CD8-positive, alpha-beta T cell (primary cell): ENCODE measurements at regions of chr4 and their contacts with region 1.

Region 1: DNA sequence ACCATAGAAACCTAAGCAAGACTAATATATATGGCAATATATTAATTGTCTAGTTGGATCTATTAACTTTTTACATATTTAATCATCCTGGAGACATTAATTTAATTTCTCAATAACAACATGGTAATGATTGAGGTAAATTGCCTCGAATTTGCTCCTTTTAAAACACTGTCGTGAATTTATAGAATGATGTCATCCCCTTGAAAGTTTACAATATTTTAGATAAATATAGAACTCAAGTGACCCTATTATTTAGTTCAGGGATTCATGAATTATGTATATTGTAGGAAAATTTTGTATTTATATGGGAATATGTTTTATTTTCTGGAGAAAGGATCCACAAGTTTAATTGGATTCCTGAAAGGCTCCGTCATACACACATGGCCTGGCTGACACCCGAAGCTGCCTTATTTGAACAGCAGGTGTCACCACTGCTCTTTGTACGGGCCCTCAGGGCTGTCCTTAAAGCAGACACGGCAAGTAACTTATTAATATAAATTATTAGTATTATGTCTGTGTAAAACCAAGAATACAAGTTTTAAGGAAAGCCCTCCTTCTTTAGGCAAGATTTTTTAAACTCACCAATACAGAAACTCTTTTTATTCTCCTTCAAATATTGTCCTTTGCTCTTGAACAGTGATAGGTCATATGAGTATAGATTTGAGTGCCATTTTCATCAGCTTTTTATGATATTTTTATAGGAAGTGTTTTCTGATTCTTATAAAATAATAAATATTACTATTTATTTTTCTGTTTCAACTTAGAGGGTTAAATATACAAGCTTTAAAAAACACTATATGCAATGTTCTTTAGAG is 1.9 kb upstream of the PLRG1 start:
- DNase-seq: peak; percentile 35 to 84 (median 70)
- ATAC-seq: peak; percentile 45
- H3K4me3 ChIP-seq: no peak overlapping the region
- H3K4me3 Mint-ChIP-seq: no peak overlapping the region
- H3K27ac ChIP-seq: no peak overlapping the region
- H3K27ac Mint-ChIP-seq: no peak overlapping the region
- H3K4me1 ChIP-seq: peaks cover 16% of the 10 kb centered on the region
- H3K4me1 Mint-ChIP-seq: peaks cover 29% of the 10 kb centered on the region
- H3K27me3 ChIP-seq: no peaks in the 10 kb centered on the region
- H3K27me3 Mint-ChIP-seq: no peaks in the 10 kb centered on the region
- CTCF ChIP-seq: peak; percentile 96

Region 2: GRCh38 chr4:154376486-154376885 is 175.6 kb before region 1 on chr4:
- CTCF ChIA-PET with region 1: no interaction called
- POLR2A ChIA-PET with region 1: no interaction called
- intact Hi-C with region 1: no loop called
- DNase-seq: no peak
- ATAC-seq: no peak
- H3K4me3 ChIP-seq: no peak overlapping the region
- H3K4me3 Mint-ChIP-seq: no peak overlapping the region
- H3K27ac ChIP-seq: no peak overlapping the region
- H3K27ac Mint-ChIP-seq: no peak overlapping the region
- H3K4me1 ChIP-seq: no peaks in the 10 kb centered on the region
- H3K4me1 Mint-ChIP-seq: no peaks in the 10 kb centered on the region
- H3K27me3 ChIP-seq: no peaks in the 10 kb centered on the region
- H3K27me3 Mint-ChIP-seq: peaks cover 2% of the 10 kb centered on the region
- CTCF ChIP-seq: no peak

Region 3: GRCh38 chr4:154779362-154779947 is 227.4 kb after region 1 on chr4:
- CTCF ChIA-PET with region 1: no interaction called
- POLR2A ChIA-PET with region 1: no interaction called
- intact Hi-C with region 1: loop called in 1 of 2 experiments (anchors 2 kb)
- DNase-seq: no peak
- ATAC-seq: no peak
- H3K4me3 ChIP-seq: no peak overlapping the region
- H3K4me3 Mint-ChIP-seq: no peak overlapping the region
- H3K27ac ChIP-seq: no peak overlapping the region
- H3K27ac Mint-ChIP-seq: no peak overlapping the region
- H3K4me1 ChIP-seq: no peaks in the 10 kb centered on the region
- H3K4me1 Mint-ChIP-seq: no peaks in the 10 kb centered on the region
- H3K27me3 ChIP-seq: no peaks in the 10 kb centered on the region
- H3K27me3 Mint-ChIP-seq: peaks cover 10% of the 10 kb centered on the region
- CTCF ChIP-seq: peak; percentile 18

Region 4: GRCh38 chr4:155371432-155372043 is 819.5 kb after region 1 on chr4:
- CTCF ChIA-PET with region 1: interaction called, 23 read pairs
- POLR2A ChIA-PET with region 1: interaction called, 11 read pairs
- intact Hi-C with region 1: loop called (anchors 1 kb)
- DNase-seq: peak in 2 of 9 experiments; percentile 43 to 61
- ATAC-seq: peak; percentile 30
- H3K4me3 ChIP-seq: no peak overlapping the region
- H3K4me3 Mint-ChIP-seq: no peak overlapping the region
- H3K27ac ChIP-seq: no peak overlapping the region
- H3K27ac Mint-ChIP-seq: no peak overlapping the region
- H3K4me1 ChIP-seq: peaks cover 8% of the 10 kb centered on the region
- H3K4me1 Mint-ChIP-seq: peaks cover 16% of the 10 kb centered on the region
- H3K27me3 ChIP-seq: no peaks in the 10 kb centered on the region
- H3K27me3 Mint-ChIP-seq: no peaks in the 10 kb centered on the region
- CTCF ChIP-seq: peak; percentile 85

Region 5: GRCh38 chr4:155777971-155778735 is 1226.1 kb after region 1 on chr4:
- CTCF ChIA-PET with region 1: no interaction called
- POLR2A ChIA-PET with region 1: no interaction called
- intact Hi-C with region 1: loop called in 1 of 2 experiments (anchors 5 kb)
- DNase-seq: no peak
- ATAC-seq: no peak
- H3K4me3 ChIP-seq: no peak overlapping the region
- H3K4me3 Mint-ChIP-seq: no peak overlapping the region
- H3K27ac ChIP-seq: no peak overlapping the region
- H3K27ac Mint-ChIP-seq: no peak overlapping the region
- H3K4me1 ChIP-seq: no peaks in the 10 kb centered on the region
- H3K4me1 Mint-ChIP-seq: no peaks in the 10 kb centered on the region
- H3K27me3 ChIP-seq: no peaks in the 10 kb centered on the region
- H3K27me3 Mint-ChIP-seq: no peaks in the 10 kb centered on the region
- CTCF ChIP-seq: no peak

Region 6: DNA sequence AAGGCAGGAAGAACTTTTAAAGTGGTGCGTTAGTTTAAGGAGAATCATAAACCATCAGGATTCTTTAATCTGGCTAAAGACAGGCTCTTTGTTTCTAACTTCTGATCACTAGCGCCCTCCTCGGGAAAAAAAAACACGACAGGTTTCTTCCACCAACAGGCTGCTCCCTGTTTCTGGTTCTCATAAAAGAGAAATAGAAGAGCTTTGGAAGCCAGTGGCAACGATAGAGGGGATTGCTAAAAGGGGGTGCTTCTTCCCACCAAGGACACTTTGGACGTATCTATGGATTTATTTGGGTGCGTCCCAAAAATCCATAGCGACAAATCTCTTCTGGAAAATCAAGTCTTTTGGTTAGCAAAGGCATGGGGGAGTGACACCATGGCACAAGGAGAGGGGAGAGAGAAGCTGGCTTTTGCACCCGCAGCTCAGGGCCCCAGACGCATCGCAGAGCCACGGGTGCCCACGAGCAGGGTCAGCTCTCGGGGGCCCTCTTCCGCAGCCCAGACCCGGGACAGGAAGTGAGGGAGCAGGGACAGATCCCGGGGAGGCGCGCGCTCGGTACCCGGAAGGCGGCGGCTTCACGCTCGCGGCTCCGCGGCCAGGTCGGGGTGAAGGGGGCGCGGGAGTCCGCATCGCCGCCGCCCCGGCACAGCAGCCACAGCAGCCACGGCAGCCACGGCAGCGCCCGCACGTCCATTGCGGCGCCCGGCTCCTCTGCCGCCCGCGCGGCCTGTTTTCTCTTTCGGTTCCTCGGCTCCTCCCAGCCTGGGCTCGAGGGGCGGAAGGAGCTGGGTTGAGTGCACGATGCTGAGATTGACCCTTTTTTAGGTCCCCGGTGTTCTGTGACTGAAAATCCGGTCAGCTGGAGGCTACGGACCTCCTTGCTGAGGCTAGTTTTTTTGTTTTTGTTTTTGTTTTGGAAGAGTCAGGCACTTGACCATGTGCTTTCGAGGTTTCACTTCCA is 1401.4 kb after region 1 on chr4 and contains the start of gene CTSO:
- CTCF ChIA-PET with region 1: interaction called, 4 read pairs
- POLR2A ChIA-PET with region 1: interaction called, 4 read pairs
- intact Hi-C with region 1: loop called (anchors 1 to 2 kb)
- DNase-seq: peak; percentile 39 to 85 (median 73)
- ATAC-seq: peak; percentile 92
- H3K4me3 ChIP-seq: peak within 1 kb of the TSS; percentile 69 to 95
- H3K4me3 Mint-ChIP-seq: peak within 1 kb of the TSS; percentile 95
- H3K27ac ChIP-seq: peak within 1 kb of the TSS; percentile 91
- H3K27ac Mint-ChIP-seq: peak within 1 kb of the TSS; percentile 97
- H3K4me1 ChIP-seq: peaks cover 7% of the 10 kb centered on the region
- H3K4me1 Mint-ChIP-seq: peaks cover 35% of the 10 kb centered on the region
- H3K27me3 ChIP-seq: no peaks in the 10 kb centered on the region
- H3K27me3 Mint-ChIP-seq: peaks cover 8% of the 10 kb centered on the region
- CTCF ChIP-seq: peak; percentile 71
- total RNA-seq, gene CTSO: 5.9 to 6.1 TPM